ENCODE measurements at regions of chr9 and their contacts with region 1.

Region 1: DNA sequence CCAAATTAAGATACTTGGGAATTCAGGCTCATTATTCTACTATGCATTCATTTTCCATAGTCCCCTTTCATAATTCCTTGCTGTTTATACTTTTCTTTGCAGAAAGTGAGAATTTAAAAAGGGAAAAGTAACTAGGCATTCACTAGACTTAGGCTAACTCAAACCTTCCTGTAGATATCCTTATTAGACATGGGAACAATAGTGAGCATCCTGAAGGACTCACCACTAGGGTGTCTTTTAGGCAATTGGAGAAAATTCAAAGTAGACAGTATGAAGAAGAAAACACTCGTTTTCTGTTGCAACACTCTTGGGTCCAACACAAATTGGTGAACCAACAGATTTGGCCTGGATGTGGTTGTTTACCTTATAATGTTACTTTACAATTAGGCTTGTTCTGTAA is 213.2 kb upstream of the GRIN3A start:
- DNase-seq: no peak
- ATAC-seq: peak; percentile 51; the same call in 1 of the 3 replicates
- H3K4me3 ChIP-seq: no peak overlapping the region
- H3K27ac ChIP-seq: no peak overlapping the region
- H3K4me1 ChIP-seq: no peaks in the 10 kb centered on the region
- H3K27me3 ChIP-seq: no peaks in the 10 kb centered on the region
- CTCF ChIP-seq: no peak
- EP300 ChIP-seq: no peak
- POLR2A ChIP-seq: no peak
- RAD21 ChIP-seq: no peak

Region 2: DNA sequence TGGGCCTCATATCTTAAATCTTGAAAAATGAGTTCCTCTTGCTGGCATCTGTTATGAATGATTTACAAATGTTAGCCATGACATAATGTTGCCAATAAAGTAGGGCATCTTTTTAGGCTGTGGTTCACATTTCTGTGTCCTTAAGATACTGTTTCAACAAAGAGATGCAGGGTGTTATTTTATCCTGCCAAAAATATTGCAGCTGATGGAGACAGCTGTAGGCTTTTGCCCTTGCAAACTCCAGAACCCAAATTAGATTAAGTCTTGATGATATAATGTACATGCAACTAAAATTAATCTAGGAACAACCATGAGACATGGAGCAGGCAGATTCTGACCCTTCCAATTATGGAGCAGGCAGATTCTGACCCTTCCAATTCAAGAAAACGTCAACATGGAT is 15.1 kb after region 1 on chr9:
- CTCF ChIA-PET with region 1: no interaction called
- POLR2A ChIA-PET with region 1: no interaction called
- in situ Hi-C with region 1: no loop called
- intact Hi-C with region 1: loop called (anchors 1 kb)
- DNase-seq: no peak
- ATAC-seq: no peak
- H3K4me3 ChIP-seq: no peak overlapping the region
- H3K27ac ChIP-seq: no peak overlapping the region
- H3K4me1 ChIP-seq: no peaks in the 10 kb centered on the region
- H3K27me3 ChIP-seq: no peaks in the 10 kb centered on the region
- CTCF ChIP-seq: no peak
- EP300 ChIP-seq: no peak
- POLR2A ChIP-seq: no peak
- RAD21 ChIP-seq: no peak

Region 3: GRCh38 chr9:102273952-102274351 is 322.4 kb after region 1 on chr9:
- CTCF ChIA-PET with region 1: no interaction called
- POLR2A ChIA-PET with region 1: no interaction called
- in situ Hi-C with region 1: no loop called
- intact Hi-C with region 1: no loop called
- DNase-seq: no peak
- ATAC-seq: no peak
- H3K4me3 ChIP-seq: no peak overlapping the region
- H3K27ac ChIP-seq: no peak overlapping the region
- H3K4me1 ChIP-seq: no peaks in the 10 kb centered on the region
- H3K27me3 ChIP-seq: no peaks in the 10 kb centered on the region
- CTCF ChIP-seq: no peak
- EP300 ChIP-seq: no peak
- POLR2A ChIP-seq: no peak
- RAD21 ChIP-seq: no peak

Region 4: GRCh38 chr9:102295195-102295594 is 343.6 kb after region 1 on chr9:
- CTCF ChIA-PET with region 1: no interaction called
- POLR2A ChIA-PET with region 1: no interaction called
- in situ Hi-C with region 1: no loop called
- intact Hi-C with region 1: no loop called
- DNase-seq: no peak
- ATAC-seq: no peak
- H3K4me3 ChIP-seq: no peak overlapping the region
- H3K27ac ChIP-seq: no peak overlapping the region
- H3K4me1 ChIP-seq: no peaks in the 10 kb centered on the region
- H3K27me3 ChIP-seq: no peaks in the 10 kb centered on the region
- CTCF ChIP-seq: no peak
- EP300 ChIP-seq: no peak
- POLR2A ChIP-seq: no peak
- RAD21 ChIP-seq: no peak

Region 5: GRCh38 chr9:102309379-102309778 is 357.8 kb after region 1 on chr9:
- CTCF ChIA-PET with region 1: no interaction called
- POLR2A ChIA-PET with region 1: no interaction called
- in situ Hi-C with region 1: no loop called
- intact Hi-C with region 1: no loop called
- DNase-seq: no peak
- ATAC-seq: no peak
- H3K4me3 ChIP-seq: no peak overlapping the region
- H3K27ac ChIP-seq: no peak overlapping the region
- H3K4me1 ChIP-seq: no peaks in the 10 kb centered on the region
- H3K27me3 ChIP-seq: no peaks in the 10 kb centered on the region
- CTCF ChIP-seq: no peak
- EP300 ChIP-seq: no peak
- POLR2A ChIP-seq: no peak
- RAD21 ChIP-seq: no peak

Measured in HepG2 (cell line).